K562 (cell line): ENCODE measurements at regions of chr4 and their contacts with region 1.

Region 1: DNA sequence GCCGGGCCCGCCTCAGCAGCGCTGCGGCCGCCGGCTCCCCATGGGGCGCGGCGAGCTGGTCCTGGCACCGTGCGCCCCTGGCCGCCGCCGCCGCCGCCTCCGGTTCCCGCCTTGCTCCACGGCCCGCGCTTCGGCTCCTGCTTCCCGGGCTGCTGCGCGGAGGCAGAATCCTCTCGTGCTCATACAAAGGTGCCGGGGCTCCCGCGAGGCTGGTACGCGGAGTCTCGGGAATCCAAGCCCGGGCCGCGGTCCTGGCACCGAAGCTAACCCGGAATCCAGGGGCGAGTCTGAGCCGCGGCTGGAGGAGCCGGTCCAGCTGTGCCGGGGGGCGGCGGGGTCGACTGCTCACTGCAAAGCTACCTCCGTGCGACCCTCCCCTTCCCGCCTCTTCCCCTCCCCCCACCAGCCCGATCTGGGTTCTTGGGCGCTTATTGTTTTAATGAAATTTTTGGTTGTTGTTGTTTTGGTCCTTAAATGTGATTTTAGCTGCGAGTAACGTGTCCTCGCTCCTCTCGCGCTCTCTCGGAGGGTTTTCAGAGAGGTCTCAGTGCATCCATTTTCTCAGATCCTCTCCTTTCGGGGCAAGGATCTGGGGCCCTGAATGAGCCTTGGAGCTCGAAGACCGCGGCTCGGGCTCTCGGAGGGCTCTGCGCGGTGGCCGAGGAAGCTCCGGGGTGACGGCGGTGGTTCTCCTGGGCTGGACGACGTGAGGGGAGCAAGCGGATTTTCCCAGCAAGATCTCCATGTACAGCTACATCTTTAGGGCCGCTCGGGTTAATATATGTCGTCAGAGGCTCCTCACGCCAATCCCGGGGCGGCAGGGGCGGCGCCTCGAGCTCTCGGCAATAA is at the start of gene HAND2:
- DNase-seq: peak; percentile 38 to 71 (median 52)
- ATAC-seq: peak; percentile 65
- H3K4me3 ChIP-seq: peak within 1 kb of the TSS; percentile 51
- H3K27ac ChIP-seq: peak within 1 kb of the TSS; percentile 69; the same call in 2 of the 3 replicates
- H3K4me1 ChIP-seq: peaks cover 0 to 25% of the 10 kb centered on the region in 2 experiments; a peak in 3 of 5 replicates
- H3K27me3 ChIP-seq: no peaks in the 10 kb centered on the region
- CTCF ChIP-seq: no peak
- EP300 ChIP-seq: no peak
- POLR2A ChIP-seq: peak; percentile 60; the same call in 1 of the 2 replicates
- RAD21 ChIP-seq: no peak
- polyA plus RNA-seq, gene HAND2: 1.7 to 2.0 TPM

Region 2: GRCh38 chr4:173357939-173358338 is 171.8 kb before region 1 on chr4:
- CTCF ChIA-PET with region 1: no interaction called
- POLR2A ChIA-PET with region 1: no interaction called
- in situ Hi-C with region 1: no loop called
- intact Hi-C with region 1: no loop called
- DNase-seq: no peak
- ATAC-seq: 0 out of 3 replicates have a peak, but pooled peaks have one; percentile 29
- H3K4me3 ChIP-seq: no peak overlapping the region
- H3K27ac ChIP-seq: no peak overlapping the region
- H3K4me1 ChIP-seq: no peaks in the 10 kb centered on the region
- H3K27me3 ChIP-seq: no peaks in the 10 kb centered on the region
- CTCF ChIP-seq: no peak
- EP300 ChIP-seq: no peak
- POLR2A ChIP-seq: no peak
- RAD21 ChIP-seq: no peak

Region 3: DNA sequence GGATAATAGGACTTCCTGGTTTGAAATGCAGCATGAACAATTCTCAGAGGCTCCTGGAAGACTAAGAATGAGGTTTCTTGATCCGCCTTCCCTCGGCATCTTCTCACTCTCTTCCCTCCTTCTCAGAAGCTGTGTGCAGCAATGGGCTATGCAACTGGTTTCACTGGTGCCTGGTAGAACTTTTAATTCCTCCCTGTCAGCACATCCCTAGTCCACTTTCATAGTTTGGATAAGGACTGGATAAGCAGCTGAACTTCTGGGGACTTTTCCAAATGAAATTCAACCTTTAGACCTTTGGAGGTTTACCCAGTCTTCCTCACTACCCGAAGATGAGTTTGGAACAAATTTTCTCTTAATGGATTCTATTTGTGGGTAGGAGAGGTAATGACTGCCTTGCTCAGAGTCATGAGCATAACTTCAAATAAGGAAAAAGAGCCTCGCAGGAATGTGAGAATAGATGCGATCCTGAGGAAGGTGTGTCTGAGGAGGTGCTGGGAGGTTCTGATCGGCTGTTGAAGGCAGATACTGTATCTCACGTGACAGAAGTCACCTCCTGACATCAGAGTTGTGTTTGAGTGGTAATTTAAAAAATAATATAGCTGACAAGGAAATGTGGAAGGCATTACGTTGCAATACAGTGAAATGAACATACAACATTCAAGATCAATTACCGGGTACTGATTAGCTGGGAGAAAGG is 56.3 kb after region 1 on chr4:
- CTCF ChIA-PET with region 1: no interaction called
- POLR2A ChIA-PET with region 1: no interaction called
- in situ Hi-C with region 1: no loop called
- intact Hi-C with region 1: loop called (anchors 5 kb)
- DNase-seq: peak; percentile 48 to 77 (median 52)
- ATAC-seq: peak; percentile 78
- H3K4me3 ChIP-seq: no peak overlapping the region
- H3K27ac ChIP-seq: peak overlapping the region; percentile 26; the same call in 2 of the 3 replicates
- H3K4me1 ChIP-seq: peaks cover 5 to 20% of the 10 kb centered on the region in 2 experiments; a peak in 3 of 5 replicates
- H3K27me3 ChIP-seq: no peaks in the 10 kb centered on the region
- CTCF ChIP-seq: no peak
- EP300 ChIP-seq: no peak
- POLR2A ChIP-seq: no peak
- RAD21 ChIP-seq: no peak